AG04449 (cell line): ENCODE measurements at regions of chr3 and their contacts with region 1.

Region 1: GRCh38 chr3:58299839-58300516 is 6.1 kb upstream of the RPP14 start:
- DNase-seq: no peak
- H3K4me3 ChIP-seq: no peak overlapping the region
- CTCF ChIP-seq: peak; percentile 28

Region 2: DNA sequence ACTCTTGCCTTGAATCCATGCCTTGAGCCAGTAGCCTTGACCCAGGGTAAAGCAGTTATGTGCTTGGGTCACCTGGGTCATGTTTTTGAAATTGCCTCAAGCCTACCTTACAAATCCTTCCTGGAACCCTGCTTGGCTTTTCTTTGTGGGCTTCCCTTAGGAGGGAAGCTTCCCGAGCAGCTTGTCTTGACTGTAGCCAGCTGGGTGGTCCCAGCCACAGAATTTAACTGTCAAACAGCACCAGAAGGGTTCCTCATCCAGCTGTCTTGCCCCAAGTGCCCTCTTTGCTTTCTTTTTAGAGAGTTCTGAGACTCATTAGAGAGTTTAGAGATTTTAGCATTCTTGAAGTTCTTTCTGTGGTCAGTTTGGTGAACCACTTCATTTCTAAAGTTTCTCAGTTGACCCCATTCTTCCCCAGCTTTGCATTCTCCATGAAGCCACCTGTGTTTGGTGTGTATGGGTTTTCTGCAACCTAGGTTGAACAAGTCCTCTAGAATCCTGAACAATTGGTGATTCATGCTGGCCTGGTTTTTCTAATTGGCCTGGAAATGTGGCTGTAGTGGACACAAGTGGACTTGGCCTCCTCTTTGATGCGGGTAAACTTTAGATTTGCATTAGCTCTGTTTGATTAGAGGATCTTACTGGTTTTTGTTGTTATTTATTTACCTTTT is 258.2 kb before region 1 on chr3:
- CTCF ChIA-PET with region 1: no interaction called
- POLR2A ChIA-PET with region 1: no interaction called
- DNase-seq: no peak
- H3K4me3 ChIP-seq: no peak overlapping the region; the same call in 1 of the 2 replicates
- CTCF ChIP-seq: no peak

Region 3: GRCh38 chr3:58200846-58201355 is 99.1 kb before region 1 on chr3:
- CTCF ChIA-PET with region 1: interaction called, 25 read pairs
- POLR2A ChIA-PET with region 1: interaction called, 3 read pairs
- DNase-seq: no peak
- H3K4me3 ChIP-seq: no peak overlapping the region
- CTCF ChIP-seq: no peak

Region 4: DNA sequence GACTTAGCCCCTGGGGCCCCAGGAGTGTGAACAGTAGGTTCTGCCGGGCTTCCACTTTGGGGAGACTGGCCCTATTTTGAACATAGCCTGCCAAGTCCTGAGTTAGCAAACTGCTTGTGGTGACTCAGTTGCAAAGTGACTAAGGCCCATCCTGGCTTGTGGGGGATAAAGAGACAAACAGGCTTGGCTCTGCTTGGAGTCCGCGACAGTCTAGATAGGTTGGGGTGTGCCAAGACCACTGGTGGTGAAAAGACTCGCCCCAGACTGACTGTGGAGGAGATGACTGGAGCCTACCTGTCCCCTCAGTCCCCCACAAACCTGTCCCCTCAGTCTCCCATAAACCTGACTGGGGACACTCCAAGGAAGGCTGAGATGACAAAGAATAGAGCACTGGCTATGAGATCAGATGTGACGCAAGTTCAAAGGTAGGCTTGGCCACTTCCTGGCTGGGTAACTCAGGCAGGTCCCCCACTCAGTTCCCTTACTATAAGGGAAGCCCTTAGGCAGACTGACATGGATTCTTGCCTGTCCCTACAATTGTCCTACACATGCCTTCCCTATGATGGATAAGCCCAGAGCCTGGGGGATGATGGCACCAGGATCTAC is 93.5 kb before region 1 on chr3:
- CTCF ChIA-PET with region 1: interaction called, 25 read pairs
- POLR2A ChIA-PET with region 1: interaction called, 3 read pairs
- DNase-seq: no peak
- H3K4me3 ChIP-seq: no peak overlapping the region
- CTCF ChIP-seq: no peak

Region 5: GRCh38 chr3:58223855-58224254 is 76.1 kb before region 1 on chr3:
- CTCF ChIA-PET with region 1: interaction called, 18 read pairs
- POLR2A ChIA-PET with region 1: no interaction called
- DNase-seq: no peak
- H3K4me3 ChIP-seq: no peak overlapping the region
- CTCF ChIP-seq: no peak

Region 6: GRCh38 chr3:58237238-58237940 is 62.6 kb before region 1 on chr3 and contains the start of gene ABHD6:
- CTCF ChIA-PET with region 1: interaction called, 35 read pairs
- POLR2A ChIA-PET with region 1: no interaction called
- DNase-seq: no peak
- H3K4me3 ChIP-seq: peak within 1 kb of the TSS; percentile 81
- CTCF ChIP-seq: peak; percentile 33

Region 7: GRCh38 chr3:58271901-58272501 is 28.0 kb before region 1 on chr3:
- CTCF ChIA-PET with region 1: interaction called, 25 read pairs
- POLR2A ChIA-PET with region 1: no interaction called
- DNase-seq: peak; percentile 71
- H3K4me3 ChIP-seq: no peak overlapping the region
- CTCF ChIP-seq: no peak

Region 8: DNA sequence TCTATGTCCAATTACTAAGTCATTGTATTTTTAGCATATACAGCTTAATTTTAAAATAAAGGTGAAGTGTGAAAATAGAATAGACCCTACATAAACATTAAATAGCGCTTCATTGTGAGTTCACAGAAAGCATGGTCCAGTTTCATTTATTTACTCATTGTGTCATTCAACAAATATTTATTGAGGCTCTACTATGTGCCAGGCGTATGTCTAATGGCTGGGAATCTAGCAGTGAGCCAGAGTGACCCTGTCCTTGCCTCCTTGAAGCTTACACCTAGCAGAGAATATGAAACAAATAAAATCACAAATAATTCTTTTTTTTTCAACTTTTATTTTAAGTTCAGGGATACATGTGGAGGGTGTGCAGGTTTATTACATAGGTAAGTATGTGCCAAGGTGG is 588.1 kb after region 1 on chr3:
- CTCF ChIA-PET with region 1: no interaction called
- POLR2A ChIA-PET with region 1: no interaction called
- DNase-seq: no peak
- H3K4me3 ChIP-seq: no peak overlapping the region
- CTCF ChIP-seq: no peak